WTC11 (cell line): ENCODE measurements at regions of chr14 and their contacts with region 1.

Region 1: DNA sequence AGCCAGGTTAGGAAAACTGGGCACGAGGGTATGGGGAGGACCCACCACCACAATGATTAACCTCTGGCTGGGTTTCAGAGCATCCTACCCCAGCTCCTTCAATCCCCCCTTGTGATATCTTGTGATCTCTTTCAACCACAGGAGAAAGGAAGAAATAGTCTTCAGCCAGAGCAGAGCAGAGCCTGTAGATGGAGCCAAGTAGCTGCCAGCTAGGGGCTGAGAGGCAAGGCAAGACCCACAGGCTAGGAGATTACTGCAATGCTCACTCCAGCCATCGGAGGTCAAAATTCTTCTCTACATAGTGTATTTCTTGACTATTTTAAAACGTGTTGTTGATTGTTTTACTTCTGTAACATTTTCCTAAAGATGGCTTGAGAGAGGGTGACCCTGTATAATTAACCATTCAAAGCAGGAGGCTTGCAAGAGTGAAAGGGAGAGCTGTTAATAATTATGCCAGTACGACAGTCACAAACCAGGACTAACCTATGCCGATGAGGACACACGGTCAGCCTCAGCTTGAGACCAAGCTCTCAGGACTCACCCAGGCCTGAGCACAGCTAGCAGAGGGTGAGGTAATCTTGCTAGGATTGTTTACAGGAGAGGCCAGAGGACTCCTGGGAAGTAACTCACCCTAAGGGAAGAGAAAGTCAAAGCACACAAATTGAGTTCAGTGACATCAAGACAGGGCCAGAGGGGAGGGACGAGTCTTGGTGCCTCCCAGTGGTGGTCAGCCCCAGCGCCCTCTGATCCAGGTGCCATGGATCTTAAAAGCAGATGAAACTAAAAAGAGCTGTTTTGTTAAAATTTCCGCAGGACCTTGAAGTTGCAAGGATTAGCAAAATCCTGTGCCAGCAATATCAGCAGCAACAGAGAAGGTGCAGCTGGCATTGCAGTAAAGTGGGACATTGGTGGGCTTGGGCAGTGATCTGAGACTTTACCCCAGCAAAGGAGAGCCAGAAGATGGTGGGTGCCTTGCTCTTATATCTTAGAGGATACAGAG is 29.8 kb upstream of the CDKN3 start:
- DNase-seq: peak; percentile 46
- ATAC-seq: peak; percentile 82
- H3K4me3 Mint-ChIP-seq: no peak overlapping the region
- H3K27ac Mint-ChIP-seq: peak overlapping the region; percentile 79
- H3K4me1 Mint-ChIP-seq: peaks cover 72% of the 10 kb centered on the region
- H3K27me3 Mint-ChIP-seq: no peaks in the 10 kb centered on the region
- CTCF ChIP-seq: 0 out of 2 replicates have a peak, but pooled peaks have one; percentile 10

Region 2: GRCh38 chr14:54257424-54257823 is 109.6 kb before region 1 on chr14:
- CTCF ChIA-PET with region 1: no interaction called
- POLR2A ChIA-PET with region 1: no interaction called
- DNase-seq: no peak
- ATAC-seq: peak; percentile 63
- H3K4me3 Mint-ChIP-seq: no peak overlapping the region
- H3K27ac Mint-ChIP-seq: no peak overlapping the region
- H3K4me1 Mint-ChIP-seq: peaks cover 32% of the 10 kb centered on the region
- H3K27me3 Mint-ChIP-seq: no peaks in the 10 kb centered on the region
- CTCF ChIP-seq: no peak

Region 3: GRCh38 chr14:54387328-54387727 is 20.3 kb after region 1 on chr14:
- CTCF ChIA-PET with region 1: interaction called, 71 read pairs
- POLR2A ChIA-PET with region 1: no interaction called
- DNase-seq: no peak
- ATAC-seq: no peak
- H3K4me3 Mint-ChIP-seq: no peak overlapping the region
- H3K27ac Mint-ChIP-seq: no peak overlapping the region
- H3K4me1 Mint-ChIP-seq: peaks cover 12% of the 10 kb centered on the region; the same call in 1 of the 2 replicates
- H3K27me3 Mint-ChIP-seq: no peaks in the 10 kb centered on the region; the same call in 1 of the 2 replicates
- CTCF ChIP-seq: no peak

Region 4: GRCh38 chr14:54396493-54397335 is 29.7 kb after region 1 on chr14 and contains the start of gene CDKN3:
- CTCF ChIA-PET with region 1: interaction called, 71 read pairs
- POLR2A ChIA-PET with region 1: interaction called, 7 read pairs
- DNase-seq: peak; percentile 97
- ATAC-seq: peak; percentile 97
- H3K4me3 Mint-ChIP-seq: peak within 1 kb of the TSS; percentile 81
- H3K27ac Mint-ChIP-seq: no peak within 1 kb of the TSS
- H3K4me1 Mint-ChIP-seq: peaks cover 31% of the 10 kb centered on the region
- H3K27me3 Mint-ChIP-seq: peaks cover 11% of the 10 kb centered on the region; the same call in 1 of the 2 replicates
- CTCF ChIP-seq: 0 out of 2 replicates have a peak, but pooled peaks have one; percentile 28
- total RNA-seq, gene CDKN3: 55.4 to 62.0 TPM (median 57.0 TPM) in 3 replicates

Region 5: GRCh38 chr14:54420013-54420809 is 53.2 kb after region 1 on chr14:
- CTCF ChIA-PET with region 1: interaction called, 45 read pairs
- POLR2A ChIA-PET with region 1: no interaction called
- DNase-seq: peak; percentile 59
- ATAC-seq: peak; percentile 95
- H3K4me3 Mint-ChIP-seq: no peak overlapping the region
- H3K27ac Mint-ChIP-seq: no peak overlapping the region; the same call in 1 of the 2 replicates
- H3K4me1 Mint-ChIP-seq: peaks cover 5% of the 10 kb centered on the region
- H3K27me3 Mint-ChIP-seq: no peaks in the 10 kb centered on the region
- CTCF ChIP-seq: peak; percentile 47; the same call in 1 of the 2 replicates